Activated T-helper 2 cell treated with anti-CD3 and anti-CD28 coated beads, Interferon-gamma antibody, Interleukin-2, Interleukin-4, amounts not matched to agents 10 μg/mL and 5 μg/mL and 100 μg/mL, durations not matched to agents 14 hours and 24 hours and 36 hours (primary cell): ENCODE measurements at regions of chr7 and their contacts with region 1.

Region 1: GRCh38 chr7:116601426-116601825 is 70.6 kb upstream of the MET start:
- DNase-seq: no peak
- H3K4me3 Mint-ChIP-seq: no peak overlapping the region
- H3K27ac Mint-ChIP-seq: no peak overlapping the region
- H3K4me1 Mint-ChIP-seq: peaks cover 8% of the 10 kb centered on the region
- H3K27me3 Mint-ChIP-seq: peaks cover 31% of the 10 kb centered on the region

Region 2: GRCh38 chr7:117873310-117874190 is 1272.1 kb after region 1 on chr7 and contains the start of gene CTTNBP2:
- intact Hi-C with region 1: loop called (anchors 5 kb)
- DNase-seq: no peak
- H3K4me3 Mint-ChIP-seq: peak within 1 kb of the TSS; percentile 39
- H3K27ac Mint-ChIP-seq: no peak within 1 kb of the TSS
- H3K4me1 Mint-ChIP-seq: peaks cover 7% of the 10 kb centered on the region
- H3K27me3 Mint-ChIP-seq: peaks cover 50% of the 10 kb centered on the region
- total RNA-seq, gene CTTNBP2: not detected in 2 replicates